CD8-positive, alpha-beta T cell (primary cell): ENCODE measurements at regions of chr3 and their contacts with region 1.

Region 1: DNA sequence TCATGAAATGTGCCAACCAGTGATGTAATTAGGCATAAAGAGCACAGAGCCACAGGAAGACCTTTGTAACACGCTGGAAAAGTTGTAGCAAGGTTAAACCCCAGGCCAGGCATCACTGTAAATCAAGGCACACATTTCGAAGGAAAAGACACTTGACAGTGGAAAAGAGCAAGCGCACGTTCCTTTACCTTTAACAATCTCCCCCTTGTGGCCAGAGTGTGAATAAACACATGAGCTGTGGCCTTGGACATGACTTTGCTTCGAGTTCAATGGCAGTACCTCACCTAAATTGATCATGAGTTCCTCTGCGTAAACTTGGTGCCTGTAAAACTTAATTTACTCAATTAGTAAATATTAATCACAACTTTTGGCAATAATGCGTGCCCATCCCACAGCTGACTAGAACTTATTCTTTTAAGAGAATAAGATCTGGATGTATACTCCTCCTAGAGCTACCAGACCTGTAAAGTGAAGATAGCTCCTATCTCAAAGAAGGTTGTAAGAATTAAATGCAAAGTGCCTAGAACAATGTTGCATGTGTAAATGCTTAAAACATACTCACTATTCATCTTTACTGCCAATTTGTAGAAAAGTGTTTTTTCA is 757.0 kb upstream of the NECTIN3 start:
- DNase-seq: peak; percentile 1 to 72 (median 55)
- ATAC-seq: peak; percentile 70
- H3K4me3 ChIP-seq: no peak overlapping the region
- H3K4me3 Mint-ChIP-seq: no peak overlapping the region
- H3K27ac ChIP-seq: no peak overlapping the region
- H3K27ac Mint-ChIP-seq: no peak overlapping the region
- H3K4me1 ChIP-seq: no peaks in the 10 kb centered on the region
- H3K4me1 Mint-ChIP-seq: peaks cover 2% of the 10 kb centered on the region
- H3K27me3 ChIP-seq: no peaks in the 10 kb centered on the region
- H3K27me3 Mint-ChIP-seq: peaks cover 4% of the 10 kb centered on the region
- CTCF ChIP-seq: peak; percentile 82

Region 2: GRCh38 chr3:108662130-108662738 is 1652.4 kb before region 1 on chr3:
- CTCF ChIA-PET with region 1: no interaction called
- POLR2A ChIA-PET with region 1: no interaction called
- intact Hi-C with region 1: loop called in 1 of 2 experiments (anchors 5 kb)
- DNase-seq: peak in 7 of 9 experiments; percentile 12 to 85 (median 33)
- ATAC-seq: peak; percentile 84
- H3K4me3 ChIP-seq: no peak overlapping the region
- H3K4me3 Mint-ChIP-seq: no peak overlapping the region
- H3K27ac ChIP-seq: no peak overlapping the region
- H3K27ac Mint-ChIP-seq: no peak overlapping the region
- H3K4me1 ChIP-seq: no peaks in the 10 kb centered on the region
- H3K4me1 Mint-ChIP-seq: peaks cover 10% of the 10 kb centered on the region
- H3K27me3 ChIP-seq: no peaks in the 10 kb centered on the region
- H3K27me3 Mint-ChIP-seq: no peaks in the 10 kb centered on the region
- CTCF ChIP-seq: peak; percentile 83

Region 3: GRCh38 chr3:109275702-109276293 is 1038.8 kb before region 1 on chr3:
- CTCF ChIA-PET with region 1: interaction called, 5 read pairs
- POLR2A ChIA-PET with region 1: no interaction called
- intact Hi-C with region 1: loop called in 1 of 2 experiments (anchors 10 kb)
- DNase-seq: peak in 1 of 9 experiments; percentile 11
- ATAC-seq: no peak
- H3K4me3 ChIP-seq: no peak overlapping the region
- H3K4me3 Mint-ChIP-seq: no peak overlapping the region
- H3K27ac ChIP-seq: no peak overlapping the region
- H3K27ac Mint-ChIP-seq: no peak overlapping the region
- H3K4me1 ChIP-seq: no peaks in the 10 kb centered on the region
- H3K4me1 Mint-ChIP-seq: peaks cover 2% of the 10 kb centered on the region
- H3K27me3 ChIP-seq: peaks cover 0 to 3% of the 10 kb centered on the region in 2 experiments
- H3K27me3 Mint-ChIP-seq: peaks cover 8% of the 10 kb centered on the region
- CTCF ChIP-seq: no peak

Region 4: GRCh38 chr3:109731620-109732473 is 582.8 kb before region 1 on chr3:
- CTCF ChIA-PET with region 1: interaction called, 14 read pairs
- POLR2A ChIA-PET with region 1: no interaction called
- intact Hi-C with region 1: loop called (anchors 1 kb)
- DNase-seq: peak; percentile 16 to 77 (median 62)
- ATAC-seq: peak; percentile 91
- H3K4me3 ChIP-seq: no peak overlapping the region
- H3K4me3 Mint-ChIP-seq: no peak overlapping the region
- H3K27ac ChIP-seq: no peak overlapping the region
- H3K27ac Mint-ChIP-seq: no peak overlapping the region
- H3K4me1 ChIP-seq: peaks cover 6% of the 10 kb centered on the region
- H3K4me1 Mint-ChIP-seq: peaks cover 7% of the 10 kb centered on the region
- H3K27me3 ChIP-seq: no peaks in the 10 kb centered on the region
- H3K27me3 Mint-ChIP-seq: no peaks in the 10 kb centered on the region
- CTCF ChIP-seq: peak; percentile 100

Region 5: DNA sequence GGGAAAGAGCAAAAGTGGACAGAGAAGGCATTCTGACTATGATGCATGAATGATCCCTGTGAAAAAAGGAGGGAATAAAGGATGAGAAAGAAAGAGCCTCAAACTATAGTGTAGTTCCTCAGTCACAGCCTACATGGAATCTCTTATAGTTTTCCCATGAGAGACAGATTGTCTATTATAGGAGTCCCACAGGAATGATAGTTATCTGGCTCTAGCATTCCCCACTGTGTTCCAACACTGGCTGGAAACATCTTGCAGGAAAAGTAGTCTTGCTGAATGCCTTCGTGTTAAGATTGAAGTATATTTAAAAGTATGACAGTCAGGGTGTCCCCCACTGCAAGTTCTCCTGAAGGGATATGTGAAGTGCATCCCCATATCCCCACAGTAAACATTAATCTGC is 115.5 kb after region 1 on chr3:
- CTCF ChIA-PET with region 1: no interaction called
- POLR2A ChIA-PET with region 1: no interaction called
- intact Hi-C with region 1: no loop called
- DNase-seq: no peak
- ATAC-seq: no peak
- H3K4me3 ChIP-seq: no peak overlapping the region
- H3K4me3 Mint-ChIP-seq: no peak overlapping the region
- H3K27ac ChIP-seq: no peak overlapping the region
- H3K27ac Mint-ChIP-seq: no peak overlapping the region
- H3K4me1 ChIP-seq: no peaks in the 10 kb centered on the region
- H3K4me1 Mint-ChIP-seq: no peaks in the 10 kb centered on the region
- H3K27me3 ChIP-seq: no peaks in the 10 kb centered on the region
- H3K27me3 Mint-ChIP-seq: no peaks in the 10 kb centered on the region
- CTCF ChIP-seq: no peak

Region 6: GRCh38 chr3:111080413-111080812 is 765.8 kb after region 1 on chr3:
- CTCF ChIA-PET with region 1: interaction called, 4 read pairs
- POLR2A ChIA-PET with region 1: no interaction called
- intact Hi-C with region 1: loop called (anchors 2 to 10 kb)
- DNase-seq: peak in 2 of 9 experiments; percentile 27 to 42
- ATAC-seq: no peak
- H3K4me3 ChIP-seq: no peak overlapping the region
- H3K4me3 Mint-ChIP-seq: no peak overlapping the region
- H3K27ac ChIP-seq: no peak overlapping the region
- H3K27ac Mint-ChIP-seq: no peak overlapping the region
- H3K4me1 ChIP-seq: no peaks in the 10 kb centered on the region
- H3K4me1 Mint-ChIP-seq: no peaks in the 10 kb centered on the region
- H3K27me3 ChIP-seq: no peaks in the 10 kb centered on the region
- H3K27me3 Mint-ChIP-seq: peaks cover 9% of the 10 kb centered on the region
- CTCF ChIP-seq: peak; percentile 67

Region 7: GRCh38 chr3:111751961-111752360 is 1437.3 kb after region 1 on chr3:
- CTCF ChIA-PET with region 1: no interaction called
- POLR2A ChIA-PET with region 1: no interaction called
- intact Hi-C with region 1: no loop called
- DNase-seq: no peak
- ATAC-seq: no peak
- H3K4me3 ChIP-seq: no peak overlapping the region
- H3K4me3 Mint-ChIP-seq: no peak overlapping the region
- H3K27ac ChIP-seq: no peak overlapping the region
- H3K27ac Mint-ChIP-seq: no peak overlapping the region
- H3K4me1 ChIP-seq: no peaks in the 10 kb centered on the region
- H3K4me1 Mint-ChIP-seq: no peaks in the 10 kb centered on the region
- H3K27me3 ChIP-seq: no peaks in the 10 kb centered on the region
- H3K27me3 Mint-ChIP-seq: no peaks in the 10 kb centered on the region
- CTCF ChIP-seq: no peak